T-cell (primary cell): ENCODE measurements at regions of chr1 and their contacts with region 1.

Region 1: DNA sequence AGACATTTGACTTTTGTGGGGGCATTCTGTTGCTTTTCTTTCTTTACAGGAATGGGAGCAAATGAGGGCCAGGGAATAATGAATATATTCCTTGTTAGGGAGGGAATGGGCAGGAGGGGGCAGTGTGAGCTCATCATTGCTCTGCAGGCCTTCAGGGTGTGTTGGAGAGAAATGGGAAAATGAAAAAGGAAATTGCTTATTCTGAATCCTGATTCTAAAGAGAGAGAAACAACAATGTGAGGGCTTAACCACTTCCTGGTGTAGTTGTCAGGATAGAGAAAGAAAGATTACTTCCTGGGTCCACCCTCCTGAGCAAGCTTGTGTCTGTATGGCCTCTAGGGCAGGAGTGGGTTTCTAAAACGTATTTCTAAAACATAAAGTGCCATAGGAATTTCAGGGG is 28.3 kb downstream of the VANGL2 start:
- DNase-seq: peak in 12 of 35 experiments; percentile 3 to 66 (median 19)
- ATAC-seq: peak; percentile 67 to 79 (median 70)
- H3K4me3 ChIP-seq: no peak overlapping the region
- H3K4me3 Mint-ChIP-seq: peak overlapping the region in 2 of 3 donors; percentile 13 to 64
- H3K27ac ChIP-seq: peak overlapping the region; percentile 81
- H3K27ac Mint-ChIP-seq: peak overlapping the region; percentile 89 to 92
- H3K4me1 ChIP-seq: peaks cover 25 to 59% of the 10 kb centered on the region in 2 experiments
- H3K4me1 Mint-ChIP-seq: peaks cover 61 to 74% (median 65%) of the 10 kb centered on the region in 3 donors
- H3K27me3 ChIP-seq: peaks cover 0 to 3% of the 10 kb centered on the region in 2 experiments
- H3K27me3 Mint-ChIP-seq: no peaks in the 10 kb centered on the region

Region 2: GRCh38 chr1:160261893-160262794 is 166.5 kb before region 1 on chr1 and contains the start of gene DCAF8:
- CTCF ChIA-PET with region 1: no interaction called
- POLR2A ChIA-PET with region 1: no interaction called
- DNase-seq: peak; percentile 95 to 100 (median 98)
- ATAC-seq: peak; percentile 88 to 93 (median 92)
- H3K4me3 ChIP-seq: peak within 1 kb of the TSS; percentile 99
- H3K4me3 Mint-ChIP-seq: peak within 1 kb of the TSS; percentile 97 to 98 (median 97)
- H3K27ac ChIP-seq: peak within 1 kb of the TSS; percentile 99
- H3K27ac Mint-ChIP-seq: peak within 1 kb of the TSS; percentile 98 to 100
- H3K4me1 ChIP-seq: peaks cover 16 to 27% of the 10 kb centered on the region in 2 experiments
- H3K4me1 Mint-ChIP-seq: peaks cover 46 to 53% (median 50%) of the 10 kb centered on the region in 3 donors
- H3K27me3 ChIP-seq: no peaks in the 10 kb centered on the region
- H3K27me3 Mint-ChIP-seq: no peaks in the 10 kb centered on the region
- total RNA-seq, gene DCAF8: 173 to 221 (median 209) TPM

Region 3: DNA sequence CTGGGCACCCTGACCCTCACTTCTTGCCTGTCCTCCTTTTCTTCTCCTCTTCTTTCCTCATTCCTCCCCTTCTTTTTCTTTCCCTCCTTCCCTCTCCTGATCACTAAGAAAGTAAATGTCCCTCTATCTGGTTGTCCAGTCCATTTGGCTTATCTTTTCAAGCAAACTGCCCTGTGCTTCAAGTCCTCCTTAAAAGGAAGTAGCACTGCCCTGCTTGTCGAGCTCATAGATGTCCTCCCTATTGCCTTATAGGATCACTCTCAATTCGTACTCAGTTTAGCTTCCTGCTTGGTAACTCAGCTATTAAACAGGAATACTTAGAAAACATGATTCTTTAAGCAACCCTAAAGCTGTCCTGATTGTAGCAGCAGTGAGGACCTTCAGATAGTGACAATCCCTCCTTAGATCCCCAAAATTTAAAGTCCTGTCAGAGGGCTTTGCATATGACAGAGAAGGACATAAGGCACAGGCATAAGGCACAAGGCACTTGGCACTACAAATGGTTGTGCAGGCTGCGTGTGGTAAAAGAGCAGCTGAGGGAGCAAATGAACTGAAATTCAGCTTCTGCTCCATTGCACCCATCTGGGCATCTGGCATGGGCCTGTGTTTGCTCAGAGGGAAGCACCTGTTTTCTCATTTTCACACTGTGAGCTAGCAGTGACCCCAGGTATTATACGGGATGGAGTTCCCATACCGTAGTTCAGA is 120.5 kb after region 1 on chr1:
- CTCF ChIA-PET with region 1: no interaction called
- POLR2A ChIA-PET with region 1: no interaction called
- DNase-seq: no peak
- ATAC-seq: no peak
- H3K4me3 ChIP-seq: no peak overlapping the region
- H3K4me3 Mint-ChIP-seq: no peak overlapping the region
- H3K27ac ChIP-seq: peak overlapping the region; percentile 25
- H3K27ac Mint-ChIP-seq: peak overlapping the region; percentile 18 to 87
- H3K4me1 ChIP-seq: peaks cover 3 to 27% of the 10 kb centered on the region in 2 experiments
- H3K4me1 Mint-ChIP-seq: peaks cover 33 to 63% (median 37%) of the 10 kb centered on the region in 3 donors
- H3K27me3 ChIP-seq: no peaks in the 10 kb centered on the region
- H3K27me3 Mint-ChIP-seq: no peaks in the 10 kb centered on the region

Region 4: GRCh38 chr1:160607011-160607671 is 178.5 kb after region 1 on chr1:
- CTCF ChIA-PET with region 1: interaction called, 3 to 10 read pairs
- POLR2A ChIA-PET with region 1: interaction called in 1 of 2 experiments, 5 read pairs
- DNase-seq: peak in 33 of 35 experiments; percentile 24 to 89 (median 61)
- ATAC-seq: peak; percentile 86 to 98 (median 94)
- H3K4me3 ChIP-seq: no peak overlapping the region
- H3K4me3 Mint-ChIP-seq: peak overlapping the region in 1 of 3 donors; percentile 60
- H3K27ac ChIP-seq: peak overlapping the region; percentile 34
- H3K27ac Mint-ChIP-seq: peak overlapping the region; percentile 88 to 90
- H3K4me1 ChIP-seq: peaks cover 6 to 26% of the 10 kb centered on the region in 2 experiments
- H3K4me1 Mint-ChIP-seq: peaks cover 25 to 48% (median 48%) of the 10 kb centered on the region in 3 donors
- H3K27me3 ChIP-seq: no peaks in the 10 kb centered on the region
- H3K27me3 Mint-ChIP-seq: no peaks in the 10 kb centered on the region